ENCODE measurements at regions of chr17 and their contacts with region 1.

Region 1: DNA sequence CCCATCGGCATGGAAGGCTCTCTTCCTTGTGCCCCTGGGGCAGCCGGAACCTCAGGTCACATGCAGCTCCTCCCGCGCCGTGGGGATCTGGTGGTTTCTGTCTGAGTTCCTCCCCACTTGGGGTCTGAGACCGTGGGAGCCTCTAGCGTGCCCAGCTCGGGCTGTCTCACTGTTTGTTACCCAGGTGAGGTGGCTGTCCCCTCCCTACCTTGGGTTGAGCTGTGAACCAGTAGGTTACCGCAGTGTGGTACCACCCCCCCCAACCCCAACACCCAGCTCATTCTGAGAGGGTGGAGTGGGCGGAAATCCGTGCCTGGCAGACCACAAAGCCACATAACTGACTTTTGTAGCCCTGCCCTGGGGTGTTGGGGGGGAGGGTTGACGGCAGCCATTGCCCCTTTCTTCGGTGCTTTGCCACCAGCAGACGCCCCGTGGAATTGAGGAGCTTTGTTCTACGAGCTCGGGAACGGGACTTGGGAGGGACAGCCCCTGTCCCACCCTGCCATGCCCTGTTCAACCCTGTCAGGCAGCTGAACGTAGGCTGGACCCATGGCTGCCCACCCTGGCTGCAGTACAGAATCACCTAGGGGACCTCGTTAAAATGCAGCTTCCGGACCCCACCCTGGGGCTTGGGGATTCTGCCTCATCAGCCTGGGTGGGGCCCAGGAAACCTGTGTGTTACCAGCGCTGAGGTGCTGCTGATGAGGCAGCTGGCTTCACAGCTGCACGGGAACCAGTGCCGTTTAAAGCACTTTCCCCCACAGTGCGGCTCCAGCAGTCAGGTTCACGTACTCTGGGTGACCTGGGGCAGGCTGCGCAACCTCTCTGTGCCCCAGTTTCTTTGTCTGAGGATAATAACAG is 18.5 kb downstream of the RAP1GAP2 start:
- DNase-seq: peak; percentile 95
- ATAC-seq: peak; percentile 82
- H3K4me3 ChIP-seq: peak overlapping the region in 4 of 5 experiments; percentile 39 to 70 (median 57)
- H3K4me3 Mint-ChIP-seq: peak overlapping the region; percentile 75
- H3K27ac ChIP-seq: peak overlapping the region; percentile 69 to 79
- H3K27ac Mint-ChIP-seq: peak overlapping the region; percentile 93
- H3K4me1 ChIP-seq: peaks cover 24 to 55% of the 10 kb centered on the region in 2 donors
- H3K4me1 Mint-ChIP-seq: peaks cover 44% of the 10 kb centered on the region
- H3K27me3 ChIP-seq: no peaks in the 10 kb centered on the region
- H3K27me3 Mint-ChIP-seq: no peaks in the 10 kb centered on the region
- CTCF ChIP-seq: no peak

Region 2: DNA sequence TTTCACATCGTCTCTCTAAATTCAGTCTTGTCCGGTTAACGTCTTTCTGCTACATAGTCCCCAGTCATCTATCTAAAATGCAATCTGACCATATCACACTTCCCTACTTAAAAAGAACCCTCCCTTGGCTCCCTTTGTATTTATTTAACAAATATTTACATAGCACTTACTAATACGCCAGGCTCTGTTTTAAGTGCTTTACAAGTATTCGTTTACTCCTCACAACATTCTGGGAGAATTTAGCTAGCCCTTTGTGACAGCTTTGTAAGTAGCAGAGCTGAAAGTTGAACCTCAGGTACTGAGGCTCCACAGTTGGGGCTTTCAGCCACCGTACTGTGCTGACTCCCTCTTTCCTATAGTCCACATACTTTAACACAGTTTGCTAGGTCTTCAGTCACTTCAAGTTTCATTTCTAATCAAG is 212.1 kb before region 1 on chr17:
- CTCF ChIA-PET with region 1: no interaction called
- POLR2A ChIA-PET with region 1: no interaction called
- intact Hi-C with region 1: no loop called
- DNase-seq: no peak
- ATAC-seq: no peak
- H3K4me3 ChIP-seq: no peak overlapping the region
- H3K4me3 Mint-ChIP-seq: no peak overlapping the region
- H3K27ac ChIP-seq: no peak overlapping the region
- H3K27ac Mint-ChIP-seq: no peak overlapping the region
- H3K4me1 ChIP-seq: peaks cover 22 to 32% of the 10 kb centered on the region in 2 donors
- H3K4me1 Mint-ChIP-seq: peaks cover 54% of the 10 kb centered on the region
- H3K27me3 ChIP-seq: no peaks in the 10 kb centered on the region
- H3K27me3 Mint-ChIP-seq: no peaks in the 10 kb centered on the region
- CTCF ChIP-seq: no peak

Region 3: DNA sequence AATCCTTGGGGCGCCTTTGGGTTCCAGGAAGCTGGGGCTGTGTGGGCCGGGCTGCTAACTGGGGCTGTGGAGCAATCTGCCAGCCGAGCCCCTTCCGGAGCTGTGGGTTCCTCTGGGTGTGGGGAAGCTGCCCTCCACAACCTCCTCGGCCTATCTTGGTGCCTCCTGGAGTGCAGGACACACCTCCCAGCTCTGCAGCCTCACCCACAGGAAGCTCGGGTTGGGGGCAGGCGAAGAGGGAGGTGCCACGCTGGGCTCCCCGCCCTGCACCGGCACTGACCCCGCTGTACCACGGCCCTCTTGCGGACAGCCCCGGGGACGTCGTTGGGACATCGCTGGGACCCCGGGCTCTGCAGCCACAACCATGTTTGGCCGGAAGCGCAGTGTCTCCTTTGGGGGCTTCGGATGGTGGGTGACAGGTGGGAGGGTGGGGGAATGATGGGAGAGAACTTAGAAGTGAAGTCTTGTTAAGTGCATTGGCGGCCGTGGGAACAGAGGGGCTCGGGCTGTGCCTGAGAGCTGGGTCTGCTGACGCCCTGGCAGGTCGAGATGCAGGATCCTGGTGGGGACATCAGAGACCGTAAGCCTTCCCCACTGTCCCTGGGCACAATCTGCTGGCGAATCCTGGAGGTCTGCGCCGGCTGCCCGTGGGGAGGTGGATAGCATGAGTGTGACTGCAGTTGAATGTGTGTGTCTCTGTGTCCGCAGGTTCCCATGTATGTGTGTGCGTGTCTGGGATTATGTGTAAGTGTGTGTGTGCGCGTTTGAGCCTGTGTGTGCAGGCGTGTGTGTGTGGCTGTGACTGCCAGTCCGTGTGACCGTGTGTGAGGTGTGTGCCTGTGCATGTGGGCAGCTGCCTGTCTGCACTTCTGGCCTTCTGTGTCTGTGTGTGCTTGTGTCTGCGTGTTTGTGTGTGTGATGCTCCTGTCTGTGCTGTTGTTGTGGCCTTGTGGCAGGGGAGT is 18.3 kb before region 1 on chr17 and contains the start of gene RAP1GAP2:
- CTCF ChIA-PET with region 1: interaction called, 25 read pairs
- POLR2A ChIA-PET with region 1: interaction called, 22 read pairs
- intact Hi-C with region 1: loop called (anchors 1 kb)
- DNase-seq: peak; percentile 65
- ATAC-seq: peak; percentile 78
- H3K4me3 ChIP-seq: peak within 1 kb of the TSS; percentile 43 to 78 (median 62)
- H3K4me3 Mint-ChIP-seq: peak within 1 kb of the TSS; percentile 96
- H3K27ac ChIP-seq: peak within 1 kb of the TSS; percentile 7 to 33
- H3K27ac Mint-ChIP-seq: peak within 1 kb of the TSS; percentile 91
- H3K4me1 ChIP-seq: peaks cover 56 to 75% of the 10 kb centered on the region in 2 donors
- H3K4me1 Mint-ChIP-seq: peaks cover 71% of the 10 kb centered on the region
- H3K27me3 ChIP-seq: no peaks in the 10 kb centered on the region
- H3K27me3 Mint-ChIP-seq: no peaks in the 10 kb centered on the region
- CTCF ChIP-seq: no peak
- total RNA-seq, gene RAP1GAP2: 13.4 and 14.9 TPM in 2 replicates

Measured in B cell (primary cell).